ENCODE measurements at regions of chr4 and their contacts with region 1.

Region 1: GRCh38 chr4:21656832-21657231 is 291.7 kb downstream of the KCNIP4 start:
- DNase-seq: peak; percentile 88
- H3K4me3 ChIP-seq: no peak overlapping the region
- H3K27ac ChIP-seq: no peak overlapping the region
- H3K4me1 ChIP-seq: peaks cover 11% of the 10 kb centered on the region
- H3K27me3 ChIP-seq: peaks cover 0 to 2% of the 10 kb centered on the region in 2 experiments
- CTCF ChIP-seq: no peak
- POLR2A ChIP-seq: no peak

Region 2: GRCh38 chr4:21699446-21699845 is 42.6 kb after region 1 on chr4:
- CTCF ChIA-PET with region 1: no interaction called
- POLR2A ChIA-PET with region 1: no interaction called
- dilution Hi-C with region 1: no loop called
- intact Hi-C with region 1: no loop called
- DNase-seq: no peak
- H3K4me3 ChIP-seq: no peak overlapping the region
- H3K27ac ChIP-seq: no peak overlapping the region
- H3K4me1 ChIP-seq: no peaks in the 10 kb centered on the region
- H3K27me3 ChIP-seq: no peaks in the 10 kb centered on the region
- CTCF ChIP-seq: no peak
- POLR2A ChIP-seq: no peak

Region 3: GRCh38 chr4:21726255-21726815 is 69.5 kb after region 1 on chr4:
- CTCF ChIA-PET with region 1: no interaction called
- POLR2A ChIA-PET with region 1: no interaction called
- dilution Hi-C with region 1: no loop called
- intact Hi-C with region 1: loop called (anchors 10 kb)
- DNase-seq: peak; percentile 85
- H3K4me3 ChIP-seq: no peak overlapping the region
- H3K27ac ChIP-seq: no peak overlapping the region
- H3K4me1 ChIP-seq: peaks cover 6% of the 10 kb centered on the region
- H3K27me3 ChIP-seq: no peaks in the 10 kb centered on the region
- CTCF ChIP-seq: no peak
- POLR2A ChIP-seq: no peak

Measured in endothelial cell of umbilical vein (primary cell).